PC-9 (cell line): ENCODE measurements at regions of chr16 and their contacts with region 1.

Region 1: DNA sequence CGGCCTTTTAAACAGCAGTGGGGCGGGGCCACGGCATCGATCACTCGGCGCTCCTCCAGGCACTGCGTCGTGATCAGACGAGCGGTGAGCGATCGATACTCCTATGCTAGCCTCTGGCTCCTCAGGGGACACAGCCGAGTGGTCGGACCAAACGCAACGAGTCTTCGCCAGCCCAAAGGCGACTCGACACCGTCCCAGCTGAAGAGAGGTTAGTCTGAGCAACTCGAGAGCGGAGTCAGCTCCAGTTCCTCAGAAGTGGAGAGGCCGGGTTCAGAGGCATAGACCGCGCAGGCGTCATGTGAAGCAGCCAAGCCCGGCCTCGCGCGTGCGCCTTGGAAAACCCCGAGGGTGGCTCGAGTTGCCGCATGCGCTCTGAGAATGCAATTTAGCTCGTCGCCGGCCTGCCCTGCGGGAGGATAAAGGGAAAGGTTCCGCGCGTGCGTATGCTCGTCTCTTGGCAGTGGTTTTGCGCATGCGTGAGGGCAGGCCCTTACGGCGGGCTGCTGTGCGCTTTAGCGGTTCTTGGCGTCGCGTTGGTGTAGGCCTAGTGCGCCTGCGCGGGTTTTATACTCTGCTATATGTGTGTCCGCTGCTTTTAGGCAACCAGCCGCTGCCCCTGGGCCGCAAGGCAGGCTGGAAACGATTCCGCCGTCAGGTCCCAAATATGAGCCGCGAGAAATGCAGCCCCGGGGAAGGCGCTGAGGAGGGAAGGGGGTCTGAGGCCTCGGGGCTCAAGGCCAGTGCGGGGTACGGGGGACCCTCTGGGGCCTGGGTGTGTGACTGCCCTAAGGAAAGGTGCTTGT is at the start of gene KDM8:
- DNase-seq: peak; percentile 99 to 100
- H3K4me3 ChIP-seq: peak within 1 kb of the TSS; percentile 70
- H3K27ac ChIP-seq: peak within 1 kb of the TSS; percentile 78
- H3K4me1 ChIP-seq: peaks cover 15% of the 10 kb centered on the region
- H3K27me3 ChIP-seq: no peaks in the 10 kb centered on the region
- CTCF ChIP-seq: no peak
- total RNA-seq, gene KDM8: 5.1 and 7.2 TPM in 2 replicates

Region 2: DNA sequence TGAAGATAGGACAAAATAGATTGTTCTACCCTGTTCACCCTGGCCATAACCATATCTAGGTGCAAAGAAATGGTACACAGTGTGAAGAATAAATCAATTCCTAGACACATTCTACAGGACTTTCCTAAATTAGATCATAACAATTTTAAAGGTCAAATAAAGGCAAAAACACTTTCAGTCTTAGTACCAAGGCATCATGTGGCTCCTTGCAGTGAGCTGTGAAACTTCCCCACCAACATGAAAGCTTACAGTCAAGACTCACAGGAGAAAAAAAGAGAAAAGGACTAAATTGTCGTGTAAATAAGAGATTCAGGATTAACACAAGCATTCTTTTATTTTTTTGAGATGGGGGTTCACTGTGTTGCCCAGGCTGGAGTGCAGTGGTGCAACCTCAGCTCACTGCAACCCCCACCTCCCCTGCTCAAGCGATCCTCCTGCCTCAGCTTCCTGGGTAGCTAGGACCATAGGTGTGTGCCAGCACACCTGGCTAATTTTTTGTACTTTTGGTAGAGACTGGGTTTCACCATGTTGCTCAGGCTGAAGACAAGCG is 50.7 kb after region 1 on chr16:
- CTCF ChIA-PET with region 1: no interaction called
- POLR2A ChIA-PET with region 1: interaction called, 13 read pairs
- intact Hi-C with region 1: no loop called
- DNase-seq: no peak
- H3K4me3 ChIP-seq: no peak overlapping the region
- H3K27ac ChIP-seq: peak overlapping the region; percentile 26
- H3K4me1 ChIP-seq: peaks cover 34% of the 10 kb centered on the region
- H3K27me3 ChIP-seq: no peaks in the 10 kb centered on the region
- CTCF ChIP-seq: no peak

Region 3: GRCh38 chr16:27293343-27293742 is 89.7 kb after region 1 on chr16:
- CTCF ChIA-PET with region 1: no interaction called
- POLR2A ChIA-PET with region 1: interaction called, 13 read pairs
- intact Hi-C with region 1: no loop called
- DNase-seq: no peak
- H3K4me3 ChIP-seq: no peak overlapping the region
- H3K27ac ChIP-seq: no peak overlapping the region
- H3K4me1 ChIP-seq: no peaks in the 10 kb centered on the region
- H3K27me3 ChIP-seq: no peaks in the 10 kb centered on the region
- CTCF ChIP-seq: no peak